ENCODE measurements at regions of chr20 and their contacts with region 1.

Region 1: GRCh38 chr20:12012241-12013222 is 94.8 kb downstream of the BTBD3 start:
- DNase-seq: peak; percentile 67
- ATAC-seq: peak; percentile 99
- H3K4me3 ChIP-seq: no peak overlapping the region
- H3K27ac ChIP-seq: no peak overlapping the region
- H3K4me1 ChIP-seq: no peaks in the 10 kb centered on the region
- H3K27me3 ChIP-seq: no peaks in the 10 kb centered on the region
- CTCF ChIP-seq: peak; percentile 74
- EP300 ChIP-seq: no peak
- POLR2A ChIP-seq: no peak
- RAD21 ChIP-seq: peak; percentile 61

Region 2: DNA sequence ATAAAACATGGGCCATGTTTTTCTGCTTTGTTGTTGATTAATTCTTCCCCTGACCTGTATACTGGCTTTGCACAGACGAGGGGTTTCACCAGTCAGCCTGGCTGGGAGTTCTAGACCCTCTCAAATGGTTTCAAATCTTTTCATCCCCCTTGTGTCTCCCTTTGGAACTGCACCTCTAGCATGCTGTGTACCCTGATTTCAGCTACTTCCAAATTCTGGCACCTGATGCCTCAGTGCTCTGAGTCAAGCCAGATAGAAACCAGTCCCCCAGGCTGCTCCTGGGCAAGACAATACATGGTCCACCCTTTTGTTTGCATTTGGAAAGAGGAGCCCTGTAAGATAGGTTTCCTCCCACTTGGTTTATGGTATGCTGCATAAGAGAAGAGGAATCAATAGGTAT is 195.3 kb after region 1 on chr20:
- CTCF ChIA-PET with region 1: no interaction called
- POLR2A ChIA-PET with region 1: no interaction called
- in situ Hi-C with region 1: no loop called
- intact Hi-C with region 1: loop called (anchors 1 kb)
- DNase-seq: peak; percentile 44
- ATAC-seq: peak; percentile 95
- H3K4me3 ChIP-seq: no peak overlapping the region
- H3K27ac ChIP-seq: no peak overlapping the region
- H3K4me1 ChIP-seq: no peaks in the 10 kb centered on the region
- H3K27me3 ChIP-seq: no peaks in the 10 kb centered on the region
- CTCF ChIP-seq: peak; percentile 63
- EP300 ChIP-seq: no peak
- POLR2A ChIP-seq: no peak
- RAD21 ChIP-seq: peak; percentile 49

Region 3: DNA sequence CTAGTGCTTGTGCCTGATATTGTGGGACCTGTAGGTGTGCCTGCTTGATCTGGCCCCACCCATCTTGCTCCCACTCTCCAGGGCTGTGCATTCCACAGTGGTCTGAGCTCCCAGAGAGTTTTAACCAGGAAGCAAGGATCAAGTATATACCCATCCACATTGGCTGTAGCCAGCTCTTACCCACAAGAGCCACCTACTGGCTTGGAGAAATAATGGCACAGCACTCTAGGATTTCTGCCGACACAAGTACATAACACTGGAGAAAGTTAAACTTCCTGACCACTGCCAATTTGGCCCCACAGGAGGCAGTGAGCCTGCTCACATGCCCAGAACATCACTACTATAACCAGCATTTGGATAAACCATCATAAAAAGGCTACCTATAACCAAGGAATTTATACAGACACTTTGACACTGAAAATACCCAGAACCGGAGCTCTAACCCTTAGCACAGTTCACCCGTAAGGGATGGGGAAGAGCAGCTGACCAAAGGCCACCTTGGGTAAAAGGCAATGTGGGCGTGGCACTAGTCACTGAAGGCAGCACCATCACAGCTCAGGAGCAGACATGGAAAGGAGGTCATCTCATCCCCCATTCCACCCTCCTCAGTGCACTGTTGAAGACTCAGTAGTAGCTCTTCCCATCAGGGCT is 345.6 kb after region 1 on chr20:
- CTCF ChIA-PET with region 1: no interaction called
- POLR2A ChIA-PET with region 1: no interaction called
- in situ Hi-C with region 1: no loop called
- intact Hi-C with region 1: loop called (anchors 2 kb)
- DNase-seq: no peak
- ATAC-seq: peak; percentile 90
- H3K4me3 ChIP-seq: no peak overlapping the region
- H3K27ac ChIP-seq: no peak overlapping the region
- H3K4me1 ChIP-seq: no peaks in the 10 kb centered on the region
- H3K27me3 ChIP-seq: no peaks in the 10 kb centered on the region
- CTCF ChIP-seq: peak; percentile 47
- EP300 ChIP-seq: no peak
- POLR2A ChIP-seq: no peak
- RAD21 ChIP-seq: no peak